ENCODE measurements at regions of chr1 and their contacts with region 1.

Region 1: DNA sequence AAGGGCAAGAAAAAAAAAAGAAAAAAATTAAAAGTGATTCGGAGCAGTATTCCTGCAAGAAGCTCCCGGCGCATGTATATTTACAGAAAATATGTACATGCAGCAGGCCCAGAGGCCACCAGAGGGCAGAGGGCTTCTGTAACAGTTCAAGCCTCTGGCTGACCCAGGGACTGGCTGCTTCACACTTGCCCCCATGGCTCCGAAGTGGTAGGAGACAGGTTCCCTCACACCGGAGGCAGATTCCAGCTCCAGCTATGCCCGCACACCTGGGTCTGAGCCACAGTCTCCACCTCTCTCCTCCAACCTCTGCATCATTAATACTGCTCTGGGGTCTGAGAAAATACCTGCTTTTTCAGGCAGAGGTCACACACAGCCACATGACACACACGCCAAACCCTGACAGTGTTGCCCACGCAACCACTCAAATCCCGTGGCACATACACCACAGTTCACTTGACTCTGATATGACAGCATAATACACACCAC is 2.2 kb upstream of the ARHGAP30 start:
- DNase-seq: peak; percentile 24
- H3K4me3 Mint-ChIP-seq: no peak overlapping the region
- H3K27ac Mint-ChIP-seq: peak overlapping the region; percentile 47
- H3K4me1 Mint-ChIP-seq: peaks cover 49% of the 10 kb centered on the region
- H3K27me3 Mint-ChIP-seq: no peaks in the 10 kb centered on the region

Region 2: DNA sequence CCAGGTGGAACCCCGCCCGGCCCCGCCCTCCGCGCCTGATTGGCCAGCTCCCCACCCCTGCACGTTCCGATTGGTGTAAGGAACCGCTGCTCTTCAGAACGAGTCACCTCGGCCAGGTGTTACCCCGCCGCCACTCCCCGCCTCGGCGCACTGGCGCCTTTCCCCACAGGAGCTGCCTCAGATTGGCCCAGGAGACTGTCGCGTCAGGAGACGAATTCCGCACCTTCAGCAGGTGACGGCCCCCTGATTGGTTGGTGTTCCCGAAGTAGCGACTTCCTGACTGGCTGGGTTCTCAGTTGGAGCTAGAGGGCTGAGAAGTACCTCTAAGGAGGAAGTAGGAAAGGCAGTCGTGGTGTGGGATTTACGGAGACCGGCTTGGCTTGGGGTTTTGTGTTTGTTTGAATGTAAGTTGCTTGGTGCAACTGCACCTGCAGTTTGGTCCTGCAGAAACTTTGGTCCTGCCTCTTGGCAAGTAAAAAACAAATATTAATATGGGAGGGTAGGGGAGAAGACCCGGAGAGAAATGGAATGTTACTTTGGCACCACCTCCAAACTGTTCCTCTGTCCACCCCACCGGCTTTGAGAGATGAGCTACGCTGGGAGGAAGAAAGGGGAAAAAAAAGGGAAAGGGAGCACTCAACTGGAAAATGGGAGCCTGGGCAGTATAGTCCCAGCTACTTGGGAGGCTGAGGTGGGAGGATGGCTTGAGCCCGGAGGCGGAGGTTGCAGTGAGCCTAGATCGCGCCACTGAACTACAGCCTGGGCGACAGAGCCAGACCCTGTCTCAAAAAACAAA is 50.6 kb before region 1 on chr1:
- intact Hi-C with region 1: loop called (anchors 2 kb)
- DNase-seq: peak; percentile 76
- H3K4me3 Mint-ChIP-seq: peak overlapping the region; percentile 91
- H3K27ac Mint-ChIP-seq: peak overlapping the region; percentile 78
- H3K4me1 Mint-ChIP-seq: peaks cover 35% of the 10 kb centered on the region
- H3K27me3 Mint-ChIP-seq: peaks cover 2% of the 10 kb centered on the region

Region 3: GRCh38 chr1:161098210-161099068 is 26.5 kb after region 1 on chr1 and contains the start of gene KLHDC9:
- intact Hi-C with region 1: loop called (anchors 1 kb)
- DNase-seq: peak; percentile 68
- H3K4me3 Mint-ChIP-seq: peak within 1 kb of the TSS; percentile 80
- H3K27ac Mint-ChIP-seq: peak within 1 kb of the TSS; percentile 96
- H3K4me1 Mint-ChIP-seq: peaks cover 39% of the 10 kb centered on the region
- H3K27me3 Mint-ChIP-seq: peaks cover 2% of the 10 kb centered on the region
- total RNA-seq, gene KLHDC9: not detected in 2 replicates

Region 4: GRCh38 chr1:161139765-161140164 is 67.8 kb after region 1 on chr1:
- intact Hi-C with region 1: loop called (anchors 1 kb)
- DNase-seq: no peak
- H3K4me3 Mint-ChIP-seq: no peak overlapping the region
- H3K27ac Mint-ChIP-seq: no peak overlapping the region
- H3K4me1 Mint-ChIP-seq: peaks cover 5% of the 10 kb centered on the region
- H3K27me3 Mint-ChIP-seq: no peaks in the 10 kb centered on the region

Region 5: GRCh38 chr1:161153679-161154426 is 81.9 kb after region 1 on chr1 and contains the start of gene UFC1:
- intact Hi-C with region 1: loop called (anchors 1 kb)
- DNase-seq: peak; percentile 80
- H3K4me3 Mint-ChIP-seq: peak within 1 kb of the TSS; percentile 99
- H3K27ac Mint-ChIP-seq: peak within 1 kb of the TSS; percentile 100
- H3K4me1 Mint-ChIP-seq: peaks cover 33% of the 10 kb centered on the region
- H3K27me3 Mint-ChIP-seq: no peaks in the 10 kb centered on the region
- total RNA-seq, gene UFC1: 86.3 and 94.5 TPM in 2 replicates